Spleen (tissue), 13 donors: ENCODE measurements at regions of chr6 and their contacts with region 1.

Region 1: GRCh38 chr6:17803409-17803808 is 96.7 kb upstream of the NUP153 start:
- DNase-seq: no peak
- H3K4me3 ChIP-seq: no peak overlapping the region
- H3K27ac ChIP-seq: no peak overlapping the region
- H3K4me1 ChIP-seq: peaks cover 0 to 6% (median 0%) of the 10 kb centered on the region in 6 donors
- H3K27me3 ChIP-seq: no peaks in the 10 kb centered on the region
- CTCF ChIP-seq: no peak
- POLR2A ChIP-seq: no peak

Region 2: GRCh38 chr6:17584241-17584803 is 219.1 kb before region 1 on chr6:
- intact Hi-C with region 1: loop called (anchors 5 kb)
- DNase-seq: no peak
- H3K4me3 ChIP-seq: peak overlapping the region in 1 of 8 donors; percentile 3
- H3K27ac ChIP-seq: peak overlapping the region in 6 of 8 donors; percentile 5 to 60 (median 36)
- H3K4me1 ChIP-seq: peaks cover 0 to 31% (median 13%) of the 10 kb centered on the region in 6 donors
- H3K27me3 ChIP-seq: peaks cover 0 to 17% (median 5%) of the 10 kb centered on the region in 7 donors
- CTCF ChIP-seq: peak; percentile 23 to 79 (median 65)
- POLR2A ChIP-seq: no peak